CD4-positive, alpha-beta memory T cell (primary cell): ENCODE measurements at regions of chr17 and their contacts with region 1.

Region 1: GRCh38 chr17:78781948-78782916 is at the start of gene CYTH1:
- DNase-seq: peak; percentile 95 to 99 (median 96)
- H3K4me3 ChIP-seq: peak within 1 kb of the TSS; percentile 63 to 91
- H3K4me3 Mint-ChIP-seq: peak within 1 kb of the TSS; percentile 89 to 96 (median 94)
- H3K27ac ChIP-seq: peak within 1 kb of the TSS; percentile 95
- H3K27ac Mint-ChIP-seq: peak within 1 kb of the TSS; percentile 93 to 99 (median 96)
- H3K4me1 ChIP-seq: peaks cover 75% of the 10 kb centered on the region
- H3K4me1 Mint-ChIP-seq: peaks cover 27 to 71% (median 47%) of the 10 kb centered on the region in 4 donors
- H3K27me3 ChIP-seq: no peaks in the 10 kb centered on the region
- H3K27me3 Mint-ChIP-seq: no peaks in the 10 kb centered on the region
- total RNA-seq, gene CYTH1: 380 to 390 TPM

Region 2: GRCh38 chr17:78583091-78583490 is 199.1 kb before region 1 on chr17:
- CTCF ChIA-PET with region 1: no interaction called
- POLR2A ChIA-PET with region 1: no interaction called
- intact Hi-C with region 1: no loop called
- DNase-seq: no peak
- H3K4me3 ChIP-seq: no peak overlapping the region
- H3K4me3 Mint-ChIP-seq: no peak overlapping the region
- H3K27ac ChIP-seq: no peak overlapping the region
- H3K27ac Mint-ChIP-seq: peak overlapping the region in 1 of 7 donors; percentile 32
- H3K4me1 ChIP-seq: no peaks in the 10 kb centered on the region
- H3K4me1 Mint-ChIP-seq: peaks cover 0 to 2% (median 0%) of the 10 kb centered on the region in 4 donors
- H3K27me3 ChIP-seq: no peaks in the 10 kb centered on the region
- H3K27me3 Mint-ChIP-seq: peaks cover 2 to 7% of the 10 kb centered on the region in 2 donors

Region 3: GRCh38 chr17:78723001-78723796 is 59.0 kb before region 1 on chr17:
- CTCF ChIA-PET with region 1: no interaction called
- POLR2A ChIA-PET with region 1: interaction called, 13 read pairs
- intact Hi-C with region 1: no loop called
- DNase-seq: no peak
- H3K4me3 ChIP-seq: no peak overlapping the region
- H3K4me3 Mint-ChIP-seq: peak overlapping the region; percentile 56 to 91 (median 70)
- H3K27ac ChIP-seq: no peak overlapping the region
- H3K27ac Mint-ChIP-seq: peak overlapping the region in 6 of 7 donors; percentile 77 to 92 (median 86)
- H3K4me1 ChIP-seq: peaks cover 100% of the 10 kb centered on the region
- H3K4me1 Mint-ChIP-seq: peaks cover 77 to 97% (median 90%) of the 10 kb centered on the region in 4 donors
- H3K27me3 ChIP-seq: no peaks in the 10 kb centered on the region
- H3K27me3 Mint-ChIP-seq: no peaks in the 10 kb centered on the region

Region 4: DNA sequence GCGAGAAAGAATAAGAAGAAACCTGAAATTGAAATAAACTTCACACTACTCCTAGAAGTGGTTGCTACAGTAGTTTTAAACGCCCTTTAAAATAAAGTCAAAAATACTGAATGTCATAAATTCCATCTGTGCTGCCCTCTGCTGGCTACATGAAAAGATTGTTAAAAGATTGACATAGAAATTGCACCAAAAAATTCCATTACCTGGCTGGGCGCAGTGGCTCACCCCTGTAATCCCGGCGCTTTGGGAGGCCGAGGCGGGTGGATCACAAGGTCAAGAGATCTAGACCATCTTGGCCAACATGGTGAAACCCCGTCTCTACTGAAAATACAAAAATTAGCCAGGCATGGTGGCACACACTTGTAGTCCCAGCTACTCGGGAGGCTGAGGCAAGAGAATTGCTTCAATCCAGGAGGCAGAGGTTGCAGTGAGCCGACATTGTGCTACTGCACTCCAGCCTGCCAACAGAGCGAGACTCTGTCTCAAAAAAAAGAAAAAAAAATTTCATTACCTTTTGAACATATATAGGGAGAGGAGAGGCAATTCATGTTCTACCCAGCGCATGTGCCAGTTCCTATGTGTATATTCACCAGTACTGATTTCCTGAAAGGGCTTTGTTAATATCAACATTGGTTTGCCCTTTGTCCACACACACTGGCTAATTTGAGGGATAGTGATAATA is 36.7 kb before region 1 on chr17:
- CTCF ChIA-PET with region 1: interaction called, 15 read pairs
- POLR2A ChIA-PET with region 1: interaction called, 961 read pairs
- intact Hi-C with region 1: loop called (anchors 1 kb)
- DNase-seq: peak in 4 of 5 donors; percentile 56 to 61 (median 60)
- H3K4me3 ChIP-seq: peak overlapping the region; percentile 9 to 31
- H3K4me3 Mint-ChIP-seq: peak overlapping the region; percentile 67 to 89 (median 78)
- H3K27ac ChIP-seq: peak overlapping the region; percentile 73
- H3K27ac Mint-ChIP-seq: peak overlapping the region; percentile 88 to 98 (median 94)
- H3K4me1 ChIP-seq: peaks cover 98% of the 10 kb centered on the region
- H3K4me1 Mint-ChIP-seq: peaks cover 76 to 98% (median 85%) of the 10 kb centered on the region in 4 donors
- H3K27me3 ChIP-seq: no peaks in the 10 kb centered on the region
- H3K27me3 Mint-ChIP-seq: no peaks in the 10 kb centered on the region

Region 5: GRCh38 chr17:78769196-78769773 is 12.9 kb before region 1 on chr17:
- CTCF ChIA-PET with region 1: interaction called, 10 read pairs
- POLR2A ChIA-PET with region 1: interaction called, 961 read pairs
- intact Hi-C with region 1: loop called (anchors 1 kb)
- DNase-seq: peak in 2 of 5 donors; percentile 44 to 54
- H3K4me3 ChIP-seq: peak overlapping the region in 1 of 2 donors; percentile 7
- H3K4me3 Mint-ChIP-seq: no peak overlapping the region
- H3K27ac ChIP-seq: peak overlapping the region; percentile 49
- H3K27ac Mint-ChIP-seq: no peak overlapping the region
- H3K4me1 ChIP-seq: peaks cover 98% of the 10 kb centered on the region
- H3K4me1 Mint-ChIP-seq: peaks cover 32 to 34% (median 33%) of the 10 kb centered on the region in 4 donors
- H3K27me3 ChIP-seq: no peaks in the 10 kb centered on the region
- H3K27me3 Mint-ChIP-seq: no peaks in the 10 kb centered on the region

Region 6: GRCh38 chr17:78806451-78806850 is 24.2 kb after region 1 on chr17:
- CTCF ChIA-PET with region 1: interaction called, 37 read pairs
- POLR2A ChIA-PET with region 1: interaction called, 53 read pairs
- intact Hi-C with region 1: loop called (anchors 2 kb)
- DNase-seq: peak in 4 of 5 donors; percentile 21 to 79 (median 64)
- H3K4me3 ChIP-seq: no peak overlapping the region
- H3K4me3 Mint-ChIP-seq: peak overlapping the region; percentile 3 to 83 (median 74)
- H3K27ac ChIP-seq: peak overlapping the region; percentile 57
- H3K27ac Mint-ChIP-seq: peak overlapping the region; percentile 87 to 99 (median 97)
- H3K4me1 ChIP-seq: peaks cover 49% of the 10 kb centered on the region
- H3K4me1 Mint-ChIP-seq: peaks cover 39 to 60% (median 52%) of the 10 kb centered on the region in 4 donors
- H3K27me3 ChIP-seq: no peaks in the 10 kb centered on the region
- H3K27me3 Mint-ChIP-seq: no peaks in the 10 kb centered on the region

Region 7: GRCh38 chr17:78840725-78841611 is 58.7 kb after region 1 on chr17 and contains the start of gene USP36:
- CTCF ChIA-PET with region 1: interaction called, 3 read pairs
- POLR2A ChIA-PET with region 1: interaction called, 13 read pairs
- intact Hi-C with region 1: loop called (anchors 2 kb)
- DNase-seq: peak; percentile 99 to 100 (median 99)
- H3K4me3 ChIP-seq: peak within 1 kb of the TSS; percentile 74 to 89
- H3K4me3 Mint-ChIP-seq: peak within 1 kb of the TSS; percentile 93 to 99 (median 96)
- H3K27ac ChIP-seq: peak within 1 kb of the TSS; percentile 95
- H3K27ac Mint-ChIP-seq: peak within 1 kb of the TSS; percentile 93 to 99 (median 99)
- H3K4me1 ChIP-seq: peaks cover 40% of the 10 kb centered on the region
- H3K4me1 Mint-ChIP-seq: peaks cover 37 to 73% (median 49%) of the 10 kb centered on the region in 4 donors
- H3K27me3 ChIP-seq: no peaks in the 10 kb centered on the region
- H3K27me3 Mint-ChIP-seq: no peaks in the 10 kb centered on the region
- total RNA-seq, gene USP36: 181 to 183 TPM